CD8-positive, alpha-beta T cell (primary cell): ENCODE measurements at regions of chr12 and their contacts with region 1.

Region 1: DNA sequence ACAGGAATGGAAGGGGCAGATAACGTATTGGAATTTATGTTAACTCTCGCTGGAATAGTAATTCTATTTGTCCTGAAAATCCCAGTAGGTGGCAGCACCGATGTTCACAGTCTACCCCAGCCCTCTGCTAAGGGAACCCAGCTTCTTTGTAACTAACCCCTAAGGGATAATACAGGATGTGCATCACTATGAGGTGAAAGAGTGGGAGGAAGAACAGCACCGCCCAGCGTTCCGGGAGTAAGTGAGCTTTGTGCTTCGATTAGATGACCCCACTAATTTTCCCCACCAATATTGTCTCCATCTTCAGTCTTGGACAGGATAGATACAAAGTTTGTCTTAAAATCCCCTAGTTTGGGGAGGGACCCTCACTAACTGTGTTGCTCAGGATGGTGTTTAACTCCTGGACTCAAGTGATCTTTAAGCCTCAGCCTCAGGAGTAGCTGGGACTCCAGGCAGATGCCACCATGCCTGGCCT is 2.7 kb downstream of the SLC2A3 start:
- DNase-seq: peak; percentile 52 to 97 (median 77)
- ATAC-seq: peak; percentile 74
- H3K4me3 ChIP-seq: peak overlapping the region; percentile 75 to 76
- H3K4me3 Mint-ChIP-seq: no peak overlapping the region
- H3K27ac ChIP-seq: peak overlapping the region; percentile 81 to 82
- H3K27ac Mint-ChIP-seq: no peak overlapping the region
- H3K4me1 ChIP-seq: peaks cover 35% of the 10 kb centered on the region
- H3K4me1 Mint-ChIP-seq: peaks cover 29% of the 10 kb centered on the region
- H3K27me3 ChIP-seq: no peaks in the 10 kb centered on the region
- H3K27me3 Mint-ChIP-seq: no peaks in the 10 kb centered on the region
- CTCF ChIP-seq: peak; percentile 74

Region 2: GRCh38 chr12:7859552-7859951 is 73.7 kb before region 1 on chr12:
- CTCF ChIA-PET with region 1: interaction called, 16 read pairs
- POLR2A ChIA-PET with region 1: interaction called, 3 read pairs
- intact Hi-C with region 1: loop called (anchors 1 to 5 kb)
- DNase-seq: no peak
- ATAC-seq: no peak
- H3K4me3 ChIP-seq: no peak overlapping the region
- H3K4me3 Mint-ChIP-seq: no peak overlapping the region
- H3K27ac ChIP-seq: no peak overlapping the region
- H3K27ac Mint-ChIP-seq: no peak overlapping the region
- H3K4me1 ChIP-seq: no peaks in the 10 kb centered on the region
- H3K4me1 Mint-ChIP-seq: peaks cover 9% of the 10 kb centered on the region
- H3K27me3 ChIP-seq: no peaks in the 10 kb centered on the region
- H3K27me3 Mint-ChIP-seq: peaks cover 5% of the 10 kb centered on the region
- CTCF ChIP-seq: no peak

Region 3: DNA sequence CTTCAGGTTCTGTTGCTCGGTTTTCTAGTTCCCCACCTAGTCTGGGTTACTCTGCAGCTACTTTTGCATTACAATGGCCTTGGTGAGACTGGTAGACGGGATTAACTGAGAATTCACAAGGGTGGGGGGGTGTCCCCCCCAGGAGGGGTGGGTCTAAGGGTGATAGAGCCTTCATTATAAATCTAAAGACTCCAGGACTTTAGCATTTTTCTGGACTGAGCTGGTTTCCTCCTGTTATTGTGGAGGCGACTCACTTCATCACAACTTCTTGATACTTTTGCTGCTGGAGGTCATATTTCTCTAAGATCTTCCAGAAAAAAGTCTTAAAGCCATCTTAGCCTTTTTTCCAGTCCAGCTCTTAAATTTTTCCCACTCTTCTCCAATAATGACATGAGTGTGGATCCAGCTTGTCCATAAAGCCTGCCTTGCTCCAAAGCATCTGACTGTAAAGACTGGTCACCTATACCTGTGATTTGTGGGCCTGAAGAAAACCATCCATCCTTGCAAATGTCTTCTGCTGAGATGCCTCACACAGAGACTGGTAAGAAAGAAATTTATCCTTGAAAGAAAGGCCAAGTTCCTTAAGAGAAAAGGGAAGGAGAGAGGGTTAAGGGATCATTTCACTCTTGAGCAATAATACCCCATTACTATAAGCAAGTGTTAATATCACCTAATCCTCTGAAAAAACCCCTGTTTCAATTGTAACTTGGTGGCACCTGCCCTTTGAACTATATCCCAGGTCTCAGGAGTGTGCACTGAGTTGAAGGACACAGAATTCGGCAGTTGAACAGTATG is 40.9 kb before region 1 on chr12:
- CTCF ChIA-PET with region 1: no interaction called
- POLR2A ChIA-PET with region 1: no interaction called
- intact Hi-C with region 1: no loop called
- DNase-seq: no peak
- ATAC-seq: no peak
- H3K4me3 ChIP-seq: no peak overlapping the region
- H3K4me3 Mint-ChIP-seq: no peak overlapping the region
- H3K27ac ChIP-seq: no peak overlapping the region
- H3K27ac Mint-ChIP-seq: no peak overlapping the region
- H3K4me1 ChIP-seq: no peaks in the 10 kb centered on the region
- H3K4me1 Mint-ChIP-seq: no peaks in the 10 kb centered on the region
- H3K27me3 ChIP-seq: no peaks in the 10 kb centered on the region
- H3K27me3 Mint-ChIP-seq: peaks cover 6% of the 10 kb centered on the region
- CTCF ChIP-seq: no peak

Region 4: DNA sequence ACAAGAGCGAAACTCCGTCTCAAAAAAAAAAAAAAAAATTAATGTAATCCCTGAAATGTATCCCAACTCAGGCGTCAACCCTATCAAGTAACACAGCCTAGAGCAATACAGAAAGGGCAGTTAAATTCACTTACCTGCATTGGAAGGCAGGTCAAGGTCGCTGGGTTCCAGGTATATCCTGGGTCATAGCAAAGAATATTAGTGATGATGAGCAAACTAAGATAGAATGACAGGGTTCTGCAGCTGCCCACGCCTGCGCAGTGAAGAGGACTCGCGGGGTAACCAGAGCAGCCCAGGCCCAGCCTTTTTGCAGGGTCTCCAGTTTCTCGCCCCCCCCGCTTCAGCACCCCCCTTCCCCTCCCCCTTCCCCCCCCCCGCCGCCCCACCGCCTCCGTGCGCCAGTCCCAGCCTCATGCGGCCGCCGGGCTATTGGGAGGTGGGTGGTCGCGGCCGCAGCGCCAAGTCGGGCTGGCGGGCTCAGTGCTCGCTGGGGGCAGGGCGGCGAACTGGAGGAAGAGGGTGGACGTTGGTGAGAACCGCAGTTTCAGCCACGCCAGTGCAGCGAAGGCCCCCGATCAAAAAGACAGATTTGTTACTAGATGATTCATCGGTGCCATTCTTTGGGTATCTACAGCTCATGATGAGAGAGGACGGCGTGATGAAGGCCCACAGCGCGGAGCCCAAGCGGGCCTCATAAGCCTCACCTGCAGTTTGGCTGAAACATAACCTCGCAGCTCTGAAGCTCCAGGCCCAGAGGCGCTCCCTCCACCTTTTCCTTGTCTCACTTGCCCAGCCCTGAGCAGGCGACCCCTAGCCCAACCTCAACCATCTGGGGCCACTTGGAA is 17.5 kb before region 1 on chr12:
- CTCF ChIA-PET with region 1: interaction called, 14 read pairs
- POLR2A ChIA-PET with region 1: interaction called, 7 read pairs
- intact Hi-C with region 1: no loop called
- DNase-seq: peak in 4 of 9 experiments; percentile 22 to 60 (median 34)
- ATAC-seq: peak; percentile 23
- H3K4me3 ChIP-seq: no peak overlapping the region
- H3K4me3 Mint-ChIP-seq: peak overlapping the region; percentile 35
- H3K27ac ChIP-seq: no peak overlapping the region
- H3K27ac Mint-ChIP-seq: no peak overlapping the region
- H3K4me1 ChIP-seq: no peaks in the 10 kb centered on the region
- H3K4me1 Mint-ChIP-seq: peaks cover 24% of the 10 kb centered on the region
- H3K27me3 ChIP-seq: no peaks in the 10 kb centered on the region
- H3K27me3 Mint-ChIP-seq: no peaks in the 10 kb centered on the region
- CTCF ChIP-seq: no peak

Region 5: GRCh38 chr12:7959701-7960121 is 26.4 kb after region 1 on chr12:
- CTCF ChIA-PET with region 1: interaction called, 158 read pairs
- POLR2A ChIA-PET with region 1: interaction called, 139 read pairs
- intact Hi-C with region 1: loop called (anchors 1 kb)
- DNase-seq: peak in 7 of 9 experiments; percentile 45 to 81 (median 62)
- ATAC-seq: peak; percentile 25
- H3K4me3 ChIP-seq: peak overlapping the region; percentile 58 to 65
- H3K4me3 Mint-ChIP-seq: peak overlapping the region; percentile 87
- H3K27ac ChIP-seq: peak overlapping the region; percentile 84 to 85
- H3K27ac Mint-ChIP-seq: peak overlapping the region; percentile 94
- H3K4me1 ChIP-seq: peaks cover 33% of the 10 kb centered on the region
- H3K4me1 Mint-ChIP-seq: peaks cover 39% of the 10 kb centered on the region
- H3K27me3 ChIP-seq: no peaks in the 10 kb centered on the region
- H3K27me3 Mint-ChIP-seq: no peaks in the 10 kb centered on the region
- CTCF ChIP-seq: no peak

Region 6: DNA sequence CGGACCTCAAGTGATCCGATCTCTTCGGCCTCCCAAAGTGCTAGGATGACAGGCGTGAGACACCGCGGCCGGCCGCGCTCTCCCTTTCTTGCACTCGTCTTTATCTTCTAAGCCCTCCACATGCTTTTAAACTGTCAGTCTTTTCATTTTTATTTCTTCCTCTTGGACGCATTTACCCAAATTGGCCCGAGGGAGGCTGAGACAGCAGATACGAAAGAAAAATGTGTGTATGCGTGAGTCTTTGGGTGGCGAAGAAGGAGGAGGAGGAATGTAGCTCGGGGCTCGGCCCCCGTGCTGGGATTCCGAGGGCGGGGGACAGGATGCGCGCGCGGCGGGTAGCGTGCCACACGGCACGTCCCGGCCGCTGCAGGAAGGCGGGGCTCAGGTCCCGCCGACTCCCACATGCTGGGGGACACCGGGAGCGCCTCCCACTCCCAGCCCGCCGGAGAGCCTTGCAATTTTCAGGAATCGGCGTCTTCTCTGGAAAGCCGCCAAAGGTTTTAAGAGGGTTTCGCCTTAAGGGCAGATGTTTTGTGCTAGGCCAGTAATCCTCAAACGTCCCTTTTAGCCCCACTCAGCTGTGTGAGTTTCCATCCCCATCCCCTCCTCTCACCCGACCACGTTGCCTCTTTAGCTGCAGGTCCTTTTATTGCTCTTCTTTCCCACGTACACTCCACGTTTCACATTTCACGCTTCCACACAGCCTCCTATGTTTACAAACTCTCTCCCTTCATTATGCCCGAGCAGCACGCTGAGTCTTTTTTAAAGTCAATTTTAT is 37.4 kb after region 1 on chr12:
- CTCF ChIA-PET with region 1: interaction called, 11 read pairs
- POLR2A ChIA-PET with region 1: interaction called, 30 read pairs
- intact Hi-C with region 1: loop called (anchors 1 kb)
- DNase-seq: peak; percentile 61 to 96 (median 88)
- ATAC-seq: peak; percentile 87
- H3K4me3 ChIP-seq: peak overlapping the region; percentile 67 to 90
- H3K4me3 Mint-ChIP-seq: peak overlapping the region; percentile 83
- H3K27ac ChIP-seq: peak overlapping the region; percentile 90 to 94
- H3K27ac Mint-ChIP-seq: peak overlapping the region; percentile 96
- H3K4me1 ChIP-seq: peaks cover 15% of the 10 kb centered on the region
- H3K4me1 Mint-ChIP-seq: peaks cover 27% of the 10 kb centered on the region
- H3K27me3 ChIP-seq: no peaks in the 10 kb centered on the region
- H3K27me3 Mint-ChIP-seq: no peaks in the 10 kb centered on the region
- CTCF ChIP-seq: no peak

Region 7: DNA sequence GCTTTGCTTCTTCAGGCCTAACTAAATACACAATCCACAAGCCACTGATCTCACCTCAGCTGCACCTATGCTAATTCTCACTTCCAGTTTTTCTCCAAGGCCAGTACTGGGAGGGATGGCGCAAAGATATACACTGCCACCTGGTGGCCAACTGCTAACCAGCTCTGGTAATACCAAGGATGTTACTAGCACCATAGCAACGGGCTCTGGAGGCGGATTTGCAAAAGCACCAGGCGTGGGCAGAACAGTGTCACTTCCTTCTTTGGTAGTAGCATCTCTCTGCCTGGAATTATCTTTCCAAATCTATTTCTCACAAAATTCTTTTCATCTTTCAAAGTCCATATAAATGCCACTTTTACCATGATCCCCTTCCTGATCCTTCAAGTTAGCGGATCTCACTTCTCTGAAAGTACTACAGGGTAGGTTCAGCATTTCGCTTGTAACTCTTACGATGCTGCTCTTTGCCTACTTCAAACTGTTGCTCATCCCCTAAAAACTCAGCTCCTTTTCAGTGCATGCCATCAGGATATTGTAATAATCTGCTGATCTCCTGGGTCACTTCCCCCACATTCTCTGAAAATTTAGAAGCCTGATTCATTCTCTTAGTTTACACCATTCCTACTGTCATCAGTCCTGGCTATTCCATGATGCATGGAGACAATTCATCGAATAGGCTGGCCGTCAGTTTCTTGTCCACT is 62.1 kb after region 1 on chr12:
- CTCF ChIA-PET with region 1: interaction called, 102 read pairs
- POLR2A ChIA-PET with region 1: interaction called, 14 read pairs
- intact Hi-C with region 1: loop called (anchors 1 kb)
- DNase-seq: peak; percentile 65 to 91 (median 81)
- ATAC-seq: peak; percentile 99
- H3K4me3 ChIP-seq: no peak overlapping the region
- H3K4me3 Mint-ChIP-seq: no peak overlapping the region
- H3K27ac ChIP-seq: peak overlapping the region; percentile 29 to 60
- H3K27ac Mint-ChIP-seq: no peak overlapping the region
- H3K4me1 ChIP-seq: peaks cover 9% of the 10 kb centered on the region
- H3K4me1 Mint-ChIP-seq: peaks cover 13% of the 10 kb centered on the region
- H3K27me3 ChIP-seq: no peaks in the 10 kb centered on the region
- H3K27me3 Mint-ChIP-seq: no peaks in the 10 kb centered on the region
- CTCF ChIP-seq: peak; percentile 75

Region 8: DNA sequence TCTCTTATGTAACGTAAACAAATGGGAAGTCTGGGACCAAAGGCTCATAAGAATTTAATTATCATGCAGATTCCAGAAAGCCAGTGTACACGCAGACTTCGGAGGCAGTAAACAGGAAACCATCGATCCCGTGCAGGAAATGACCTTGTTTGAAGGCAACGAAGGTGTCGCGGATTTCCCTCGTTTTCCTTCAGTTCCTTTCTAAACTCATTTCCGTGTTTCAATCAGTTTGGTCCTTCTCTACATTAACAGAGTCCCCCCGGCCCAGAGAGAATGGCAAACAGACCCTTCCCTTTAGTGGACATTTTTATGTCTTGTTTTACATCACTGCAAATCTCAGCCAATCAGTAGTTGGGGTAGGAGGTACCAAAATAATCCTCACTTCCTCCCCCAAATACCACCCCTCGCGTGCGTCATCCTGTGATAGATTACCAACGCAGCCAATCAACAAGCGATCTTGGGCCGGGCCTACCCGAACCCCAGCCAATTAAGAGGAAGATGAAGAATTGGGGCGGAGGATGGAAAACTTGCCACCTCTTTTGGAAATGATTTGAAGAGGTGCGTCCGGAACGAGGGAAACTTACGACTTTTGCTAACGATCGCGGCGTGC is 93.1 kb after region 1 on chr12:
- CTCF ChIA-PET with region 1: no interaction called
- POLR2A ChIA-PET with region 1: interaction called, 10 read pairs
- intact Hi-C with region 1: loop called in 1 of 2 experiments (anchors 1 kb)
- DNase-seq: peak; percentile 90 to 99 (median 94)
- ATAC-seq: peak; percentile 89
- H3K4me3 ChIP-seq: peak overlapping the region; percentile 84 to 93
- H3K4me3 Mint-ChIP-seq: peak overlapping the region; percentile 95
- H3K27ac ChIP-seq: peak overlapping the region; percentile 97 to 100
- H3K27ac Mint-ChIP-seq: peak overlapping the region; percentile 100
- H3K4me1 ChIP-seq: peaks cover 6% of the 10 kb centered on the region
- H3K4me1 Mint-ChIP-seq: peaks cover 21% of the 10 kb centered on the region
- H3K27me3 ChIP-seq: no peaks in the 10 kb centered on the region
- H3K27me3 Mint-ChIP-seq: no peaks in the 10 kb centered on the region
- CTCF ChIP-seq: no peak

Region 9: GRCh38 chr12:8622646-8623045 is 689.4 kb after region 1 on chr12:
- CTCF ChIA-PET with region 1: no interaction called
- POLR2A ChIA-PET with region 1: no interaction called
- intact Hi-C with region 1: no loop called
- DNase-seq: no peak
- ATAC-seq: no peak
- H3K4me3 ChIP-seq: no peak overlapping the region
- H3K4me3 Mint-ChIP-seq: no peak overlapping the region
- H3K27ac ChIP-seq: no peak overlapping the region
- H3K27ac Mint-ChIP-seq: no peak overlapping the region
- H3K4me1 ChIP-seq: no peaks in the 10 kb centered on the region
- H3K4me1 Mint-ChIP-seq: no peaks in the 10 kb centered on the region
- H3K27me3 ChIP-seq: no peaks in the 10 kb centered on the region
- H3K27me3 Mint-ChIP-seq: no peaks in the 10 kb centered on the region
- CTCF ChIP-seq: no peak